CD14-positive monocyte (primary cell): ENCODE measurements at regions of chr4 and their contacts with region 1.

Region 1: GRCh38 chr4:77819843-77820648 is 878 bp upstream of the CNOT6L start:
- DNase-seq: peak; percentile 82 to 83 (median 83)
- H3K4me3 ChIP-seq: peak overlapping the region; percentile 66 to 95 (median 69)
- H3K4me3 Mint-ChIP-seq: peak overlapping the region; percentile 96 to 97
- H3K27ac ChIP-seq: peak overlapping the region; percentile 91 to 94
- H3K27ac Mint-ChIP-seq: peak overlapping the region; percentile 98 to 99 (median 99)
- H3K4me1 ChIP-seq: peaks cover 35 to 36% of the 10 kb centered on the region in 2 donors
- H3K4me1 Mint-ChIP-seq: peaks cover 44% of the 10 kb centered on the region
- H3K27me3 ChIP-seq: no peaks in the 10 kb centered on the region
- H3K27me3 Mint-ChIP-seq: peaks cover 0 to 5% (median 2%) of the 10 kb centered on the region in 3 donors
- CTCF ChIP-seq: no peak

Region 2: GRCh38 chr4:77734928-77735327 is 85.1 kb before region 1 on chr4:
- intact Hi-C with region 1: loop called in 1 of 2 experiments (anchors 10 kb)
- DNase-seq: peak; percentile 53 to 71 (median 57)
- H3K4me3 ChIP-seq: peak overlapping the region in 2 of 3 experiments; percentile 25 to 63
- H3K4me3 Mint-ChIP-seq: peak overlapping the region; percentile 65 to 85
- H3K27ac ChIP-seq: peak overlapping the region in 1 of 2 donors; percentile 74
- H3K27ac Mint-ChIP-seq: peak overlapping the region; percentile 55 to 86 (median 83)
- H3K4me1 ChIP-seq: peaks cover 10 to 29% of the 10 kb centered on the region in 2 donors
- H3K4me1 Mint-ChIP-seq: peaks cover 32% of the 10 kb centered on the region
- H3K27me3 ChIP-seq: no peaks in the 10 kb centered on the region
- H3K27me3 Mint-ChIP-seq: no peaks in the 10 kb centered on the region
- CTCF ChIP-seq: no peak

Region 3: GRCh38 chr4:77862478-77863216 is 42.6 kb after region 1 on chr4 and contains the start of gene MRPL1:
- intact Hi-C with region 1: loop called (anchors 1 to 2 kb)
- DNase-seq: peak; percentile 92 to 94 (median 93)
- H3K4me3 ChIP-seq: peak within 1 kb of the TSS; percentile 64 to 91 (median 79)
- H3K4me3 Mint-ChIP-seq: peak within 1 kb of the TSS; percentile 86 to 99
- H3K27ac ChIP-seq: peak within 1 kb of the TSS; percentile 92 to 96
- H3K27ac Mint-ChIP-seq: peak within 1 kb of the TSS; percentile 98 to 99 (median 99)
- H3K4me1 ChIP-seq: peaks cover 15 to 19% of the 10 kb centered on the region in 2 donors
- H3K4me1 Mint-ChIP-seq: peaks cover 27% of the 10 kb centered on the region
- H3K27me3 ChIP-seq: no peaks in the 10 kb centered on the region
- H3K27me3 Mint-ChIP-seq: peaks cover 0 to 3% (median 0%) of the 10 kb centered on the region in 3 donors
- CTCF ChIP-seq: peak; percentile 50
- polyA plus RNA-seq, gene MRPL1: 4.0 to 11.8 (median 10.7) TPM